Heart right ventricle (tissue), 16 donors: ENCODE measurements at regions of chr18 and their contacts with region 1.

Region 1: DNA sequence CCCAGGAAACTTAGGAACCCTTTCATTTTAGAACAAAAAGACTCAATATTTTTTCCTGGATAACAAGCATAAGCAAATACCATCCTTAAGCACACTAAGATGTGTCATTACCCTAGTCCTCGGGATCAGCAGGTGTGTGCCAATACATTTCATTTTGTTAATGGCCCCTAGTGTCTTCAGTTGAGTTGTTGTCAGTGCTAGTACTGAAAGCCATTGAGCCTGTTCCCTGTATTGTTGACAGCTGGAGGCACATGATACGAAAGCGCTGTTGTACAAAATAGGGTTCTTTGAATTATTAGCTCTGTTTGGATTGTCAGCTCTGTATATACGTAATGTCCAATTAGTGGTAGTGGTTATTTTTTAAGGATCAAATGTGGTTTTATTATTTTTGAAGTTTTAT is 29.5 kb downstream of the VAPA start:
- DNase-seq: no peak
- ATAC-seq: peak in 4 of 8 donors; percentile 25 to 65 (median 40)
- H3K4me3 ChIP-seq: no peak overlapping the region
- H3K27ac ChIP-seq: no peak overlapping the region
- H3K4me1 ChIP-seq: peaks cover 0 to 3% (median 0%) of the 10 kb centered on the region in 9 donors
- H3K27me3 ChIP-seq: no peaks in the 10 kb centered on the region
- CTCF ChIP-seq: no peak

Region 2: GRCh38 chr18:9683407-9684396 is 259.6 kb before region 1 on chr18:
- intact Hi-C with region 1: loop called in 1 of 10 experiments (anchors 5 kb)
- DNase-seq: peak in 1 of 2 donors; percentile 29
- ATAC-seq: peak; percentile 44 to 87 (median 70)
- H3K4me3 ChIP-seq: no peak overlapping the region
- H3K27ac ChIP-seq: peak overlapping the region in 8 of 10 donors; percentile 46 to 82 (median 70)
- H3K4me1 ChIP-seq: peaks cover 0 to 36% (median 22%) of the 10 kb centered on the region in 9 donors
- H3K27me3 ChIP-seq: no peaks in the 10 kb centered on the region
- CTCF ChIP-seq: peak in 7 of 9 donors; percentile 16 to 60 (median 52)

Region 3: DNA sequence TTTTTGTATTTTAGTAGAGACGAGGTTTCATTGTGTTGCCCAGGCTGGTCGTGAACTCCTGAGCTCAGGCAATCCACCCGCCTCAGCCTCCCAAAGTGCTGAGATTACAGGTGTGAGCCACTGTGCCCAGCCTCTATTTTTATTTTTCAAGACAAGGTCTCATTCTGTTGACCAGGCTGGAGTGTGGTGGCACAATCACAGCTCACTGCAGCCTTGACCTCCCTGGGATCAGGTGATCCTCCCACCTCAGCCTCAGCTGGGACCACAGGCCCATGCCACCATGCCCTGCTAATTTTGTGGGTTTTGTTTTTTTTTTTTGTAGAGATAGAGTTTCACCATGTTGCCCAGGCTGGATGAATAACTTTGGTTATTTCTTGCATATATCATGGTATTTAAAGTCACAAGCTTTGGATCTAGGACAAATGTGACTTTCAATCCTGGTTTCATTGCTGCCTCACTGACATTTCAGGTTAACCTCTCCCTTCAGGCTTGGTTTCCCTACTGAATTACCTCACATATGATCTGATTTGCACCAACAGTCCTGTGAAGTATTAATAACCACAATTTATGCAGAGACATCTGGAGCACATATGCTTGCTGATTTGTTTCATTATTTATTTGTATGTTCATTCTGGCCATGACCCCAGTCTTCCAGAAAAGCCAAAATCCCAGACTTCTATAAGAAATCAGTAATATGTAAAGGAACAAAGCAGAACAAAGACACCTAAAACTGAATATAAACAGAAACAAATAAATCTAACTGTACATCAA is 252.7 kb before region 1 on chr18:
- intact Hi-C with region 1: loop called in 1 of 10 experiments (anchors 10 kb)
- DNase-seq: no peak
- ATAC-seq: no peak
- H3K4me3 ChIP-seq: no peak overlapping the region
- H3K27ac ChIP-seq: no peak overlapping the region
- H3K4me1 ChIP-seq: peaks cover 0 to 9% (median 3%) of the 10 kb centered on the region in 9 donors
- H3K27me3 ChIP-seq: no peaks in the 10 kb centered on the region
- CTCF ChIP-seq: no peak

Region 4: GRCh38 chr18:9808295-9809241 is 134.7 kb before region 1 on chr18:
- intact Hi-C with region 1: loop called in 1 of 10 experiments (anchors 10 kb)
- DNase-seq: no peak
- ATAC-seq: peak in 7 of 8 donors; percentile 41 to 87 (median 57)
- H3K4me3 ChIP-seq: peak overlapping the region in 1 of 10 donors; percentile 16
- H3K27ac ChIP-seq: peak overlapping the region; percentile 9 to 80 (median 62)
- H3K4me1 ChIP-seq: peaks cover 15 to 56% (median 45%) of the 10 kb centered on the region in 9 donors
- H3K27me3 ChIP-seq: no peaks in the 10 kb centered on the region
- CTCF ChIP-seq: no peak